Tibial artery (tissue), 4 donors: ENCODE measurements at regions of chr3 and their contacts with region 1.

Region 1: GRCh38 chr3:38164966-38165680 is at the start of gene OXSR1:
- DNase-seq: peak; percentile 99
- H3K4me3 ChIP-seq: peak within 1 kb of the TSS; percentile 67 to 98
- H3K27ac ChIP-seq: peak within 1 kb of the TSS; percentile 92 to 97
- H3K4me1 ChIP-seq: peaks cover 0 to 42% (median 22%) of the 10 kb centered on the region in 4 donors
- H3K27me3 ChIP-seq: no peaks in the 10 kb centered on the region
- CTCF ChIP-seq: no peak

Region 2: DNA sequence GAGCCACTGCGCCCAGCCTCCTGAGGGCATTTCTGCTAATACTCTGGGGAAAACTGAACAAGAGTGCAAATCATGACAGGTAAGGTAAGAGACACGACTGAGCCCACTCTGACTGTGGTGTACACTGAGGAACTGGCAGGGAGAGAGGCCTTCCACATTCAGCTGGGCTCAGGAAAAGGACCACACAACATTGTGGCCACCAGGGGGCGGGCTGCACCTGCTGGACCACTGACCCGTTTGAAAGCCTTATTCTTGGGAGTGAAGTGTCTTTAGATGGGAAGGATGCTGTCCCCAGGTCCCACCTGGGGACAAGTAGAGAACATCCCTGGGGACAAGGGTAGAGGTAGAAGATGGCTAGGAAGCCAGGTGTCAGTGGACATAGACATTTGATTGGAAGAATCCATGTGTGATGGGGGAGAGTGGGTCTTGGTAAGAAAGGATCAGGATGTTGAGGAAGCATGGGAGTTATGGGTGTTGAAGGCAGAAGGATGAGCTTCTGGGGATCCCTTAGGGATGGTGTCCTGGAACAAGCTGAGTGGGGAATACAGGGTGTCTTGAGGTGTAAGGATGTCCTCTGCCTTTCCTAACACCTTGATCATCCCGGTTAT is 309.7 kb before region 1 on chr3:
- intact Hi-C with region 1: loop called (anchors 10 kb)
- DNase-seq: peak; percentile 87 to 89
- H3K4me3 ChIP-seq: no peak overlapping the region
- H3K27ac ChIP-seq: no peak overlapping the region
- H3K4me1 ChIP-seq: peaks cover 0 to 25% (median 18%) of the 10 kb centered on the region in 4 donors
- H3K27me3 ChIP-seq: no peaks in the 10 kb centered on the region
- CTCF ChIP-seq: peak; percentile 87 to 94

Region 3: GRCh38 chr3:37905987-37906674 is 259.0 kb before region 1 on chr3:
- intact Hi-C with region 1: no loop called
- DNase-seq: peak in 1 of 2 donors; percentile 43
- H3K4me3 ChIP-seq: peak overlapping the region in 1 of 2 donors; percentile 6
- H3K27ac ChIP-seq: peak overlapping the region; percentile 70 to 74
- H3K4me1 ChIP-seq: peaks cover 8 to 62% (median 43%) of the 10 kb centered on the region in 4 donors
- H3K27me3 ChIP-seq: no peaks in the 10 kb centered on the region
- CTCF ChIP-seq: no peak

Region 4: GRCh38 chr3:38004415-38005076 is 160.6 kb before region 1 on chr3:
- intact Hi-C with region 1: loop called (anchors 10 kb)
- DNase-seq: peak; percentile 78 to 83
- H3K4me3 ChIP-seq: no peak overlapping the region
- H3K27ac ChIP-seq: no peak overlapping the region
- H3K4me1 ChIP-seq: peaks cover 0 to 19% (median 0%) of the 10 kb centered on the region in 4 donors
- H3K27me3 ChIP-seq: no peaks in the 10 kb centered on the region
- CTCF ChIP-seq: peak; percentile 55 to 60

Region 5: GRCh38 chr3:38039101-38039898 is 125.8 kb before region 1 on chr3 and contains the start of gene DLEC1:
- intact Hi-C with region 1: loop called (anchors 10 kb)
- DNase-seq: peak; percentile 56 to 77
- H3K4me3 ChIP-seq: peak within 1 kb of the TSS; percentile 47 to 55
- H3K27ac ChIP-seq: peak within 1 kb of the TSS; percentile 2 to 11
- H3K4me1 ChIP-seq: peaks cover 0 to 14% (median 10%) of the 10 kb centered on the region in 4 donors
- H3K27me3 ChIP-seq: no peaks in the 10 kb centered on the region
- CTCF ChIP-seq: no peak

Region 6: GRCh38 chr3:38119821-38120691 is 45.1 kb before region 1 on chr3:
- intact Hi-C with region 1: no loop called
- DNase-seq: peak; percentile 14 to 54
- H3K4me3 ChIP-seq: no peak overlapping the region
- H3K27ac ChIP-seq: no peak overlapping the region
- H3K4me1 ChIP-seq: peaks cover 0 to 6% (median 0%) of the 10 kb centered on the region in 4 donors
- H3K27me3 ChIP-seq: no peaks in the 10 kb centered on the region
- CTCF ChIP-seq: no peak

Region 7: DNA sequence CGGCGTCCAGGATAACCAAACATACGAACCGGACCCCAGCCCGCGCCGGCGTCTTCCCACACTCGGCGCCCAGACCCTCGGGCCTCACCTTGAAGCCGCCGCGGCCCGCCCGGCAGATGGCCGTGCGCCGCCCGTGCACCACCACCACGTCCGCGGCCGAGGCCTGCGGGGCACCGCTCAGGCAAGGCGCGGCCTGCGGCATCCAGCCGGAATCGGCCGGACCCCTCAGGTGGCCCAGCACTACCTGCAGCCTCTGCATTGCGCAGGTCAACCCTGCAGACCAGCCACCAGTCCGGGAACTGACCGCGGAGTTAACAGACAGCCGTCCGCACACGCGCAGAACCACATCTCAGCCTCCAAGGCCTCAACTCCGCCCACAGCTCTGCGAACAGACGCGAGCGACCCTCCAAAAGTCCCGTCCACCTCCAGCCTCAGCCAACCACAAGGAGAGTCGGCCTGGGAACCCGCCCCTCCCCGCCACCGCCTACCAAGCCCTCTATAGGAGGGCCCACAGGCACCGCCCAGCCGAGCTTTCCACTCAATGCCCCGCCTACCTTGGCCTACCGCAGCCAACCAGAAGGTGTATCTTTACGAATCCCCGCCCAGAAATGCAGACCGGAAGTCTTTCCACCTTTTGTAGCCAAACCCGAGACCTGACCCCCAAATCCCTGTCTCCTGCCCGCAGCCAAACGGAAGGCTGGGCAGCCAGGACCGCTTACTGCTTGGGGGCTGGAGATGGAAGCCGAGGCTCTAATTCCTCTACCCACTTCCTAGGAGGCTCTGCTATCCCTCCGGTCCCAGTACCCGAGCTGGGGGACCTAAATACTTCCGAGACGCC is 28.1 kb before region 1 on chr3 and contains the start of gene ACAA1:
- intact Hi-C with region 1: loop called (anchors 2 kb)
- DNase-seq: peak; percentile 100
- H3K4me3 ChIP-seq: peak within 1 kb of the TSS; percentile 90 to 97
- H3K27ac ChIP-seq: peak within 1 kb of the TSS; percentile 88 to 89
- H3K4me1 ChIP-seq: peaks cover 0 to 67% (median 37%) of the 10 kb centered on the region in 4 donors
- H3K27me3 ChIP-seq: no peaks in the 10 kb centered on the region
- CTCF ChIP-seq: peak in 1 of 2 experiments; percentile 8

Region 8: GRCh38 chr3:38334142-38335055 is 169.3 kb after region 1 on chr3:
- intact Hi-C with region 1: no loop called
- DNase-seq: no peak
- H3K4me3 ChIP-seq: no peak overlapping the region
- H3K27ac ChIP-seq: no peak overlapping the region
- H3K4me1 ChIP-seq: no peaks in the 10 kb centered on the region
- H3K27me3 ChIP-seq: no peaks in the 10 kb centered on the region
- CTCF ChIP-seq: no peak

Region 9: GRCh38 chr3:38687321-38687720 is 522.2 kb after region 1 on chr3:
- intact Hi-C with region 1: no loop called
- DNase-seq: no peak
- H3K4me3 ChIP-seq: no peak overlapping the region
- H3K27ac ChIP-seq: no peak overlapping the region
- H3K4me1 ChIP-seq: no peaks in the 10 kb centered on the region
- H3K27me3 ChIP-seq: no peaks in the 10 kb centered on the region
- CTCF ChIP-seq: no peak